ENCODE measurements at regions of chr7 and their contacts with region 1.

Region 1: DNA sequence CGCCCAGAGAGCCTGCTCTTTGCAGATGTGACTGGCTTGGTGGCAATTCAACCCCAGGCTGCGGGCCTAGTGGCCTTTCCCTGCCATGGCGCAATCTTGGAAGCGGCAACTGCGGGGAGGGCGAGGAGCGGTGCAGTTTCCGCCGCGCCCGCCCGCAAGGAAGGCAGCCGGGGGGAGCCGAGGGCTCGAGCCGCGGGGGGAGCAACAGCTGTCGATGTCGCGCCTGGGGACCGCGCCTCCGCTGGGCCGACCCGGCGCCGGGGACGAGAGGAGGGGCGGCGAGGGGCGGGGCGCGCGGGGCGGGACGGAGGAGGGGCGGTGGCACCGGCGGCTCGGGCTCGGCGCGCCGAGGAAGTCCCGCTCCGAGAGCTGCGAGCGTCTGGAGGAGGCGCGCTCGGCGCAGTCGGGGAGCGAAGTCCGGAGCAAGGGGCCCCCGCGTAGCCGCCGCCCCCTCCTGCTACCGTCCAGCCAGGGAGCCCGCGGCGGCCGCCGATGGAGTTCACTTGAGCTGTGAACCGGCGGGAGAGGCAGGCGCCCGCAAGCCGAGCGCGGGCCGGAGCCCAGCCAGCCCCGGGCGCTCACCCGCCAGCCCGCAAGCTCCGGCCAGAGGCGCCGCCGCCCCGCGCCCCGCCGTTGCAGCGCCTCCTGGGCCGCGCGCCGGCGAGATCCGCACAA is 438.1 kb upstream of the GALNT17 start:
- DNase-seq: no peak
- H3K4me3 ChIP-seq: peak overlapping the region in 2 of 3 experiments; percentile 25 to 27
- H3K27ac ChIP-seq: no peak overlapping the region
- H3K4me1 ChIP-seq: no peaks in the 10 kb centered on the region
- H3K27me3 ChIP-seq: peaks cover 22% of the 10 kb centered on the region in 2 experiments
- CTCF ChIP-seq: no peak
- POLR2A ChIP-seq: no peak

Region 2: GRCh38 chr7:69598081-69598486 is 1095.7 kb before region 1 on chr7 and contains the start of gene AUTS2:
- CTCF ChIA-PET with region 1: no interaction called
- POLR2A ChIA-PET with region 1: no interaction called
- dilution Hi-C with region 1: no loop called
- intact Hi-C with region 1: loop called (anchors 2 kb)
- DNase-seq: peak; percentile 84
- H3K4me3 ChIP-seq: peak within 1 kb of the TSS; percentile 60 to 67 (median 62)
- H3K27ac ChIP-seq: no peak within 1 kb of the TSS
- H3K4me1 ChIP-seq: peaks cover 5% of the 10 kb centered on the region
- H3K27me3 ChIP-seq: peaks cover 17 to 24% of the 10 kb centered on the region in 2 experiments
- CTCF ChIP-seq: no peak
- POLR2A ChIP-seq: no peak
- total RNA-seq, gene AUTS2: 8.0 and 11.3 TPM in 2 replicates

Region 3: DNA sequence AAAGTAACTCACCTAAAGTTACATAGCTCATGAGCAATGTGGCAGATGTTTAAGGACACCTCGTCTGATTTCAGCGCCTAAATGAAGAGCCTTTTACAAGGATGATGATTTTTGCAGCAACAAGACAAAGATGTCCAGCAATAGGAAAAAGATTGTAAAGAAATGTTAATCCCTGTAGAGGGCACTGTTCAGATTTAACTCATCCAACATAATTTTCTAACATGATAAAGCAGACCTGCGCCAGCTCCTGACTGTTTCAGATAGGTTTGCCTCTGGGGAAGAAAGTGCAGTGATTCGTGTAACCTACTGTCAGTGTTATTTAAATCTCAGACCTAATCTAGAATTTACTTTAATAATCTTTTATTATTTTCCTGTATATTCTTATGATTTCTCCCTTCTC is 500.3 kb before region 1 on chr7:
- CTCF ChIA-PET with region 1: no interaction called
- POLR2A ChIA-PET with region 1: no interaction called
- dilution Hi-C with region 1: no loop called
- intact Hi-C with region 1: loop called (anchors 10 kb)
- DNase-seq: no peak
- H3K4me3 ChIP-seq: no peak overlapping the region
- H3K27ac ChIP-seq: no peak overlapping the region
- H3K4me1 ChIP-seq: no peaks in the 10 kb centered on the region
- H3K27me3 ChIP-seq: no peaks in the 10 kb centered on the region
- CTCF ChIP-seq: no peak
- POLR2A ChIP-seq: no peak